ENCODE measurements at regions of chr14 and their contacts with region 1.

Region 1: GRCh38 chr14:51239813-51240803 is at the start of gene TMX1:
- DNase-seq: peak; percentile 63 to 95 (median 80)
- ATAC-seq: peak; percentile 90
- H3K4me3 ChIP-seq: peak within 1 kb of the TSS; percentile 86
- H3K4me3 Mint-ChIP-seq: no peak within 1 kb of the TSS
- H3K27ac ChIP-seq: peak within 1 kb of the TSS; percentile 69 to 75
- H3K27ac Mint-ChIP-seq: no peak within 1 kb of the TSS
- H3K4me1 ChIP-seq: peaks cover 19% of the 10 kb centered on the region
- H3K4me1 Mint-ChIP-seq: peaks cover 42% of the 10 kb centered on the region
- H3K27me3 ChIP-seq: no peaks in the 10 kb centered on the region
- H3K27me3 Mint-ChIP-seq: no peaks in the 10 kb centered on the region
- CTCF ChIP-seq: no peak
- total RNA-seq, gene TMX1: 9.5 to 11.0 TPM

Region 2: GRCh38 chr14:51094901-51095853 is 144.9 kb before region 1 on chr14 and contains the start of gene TRIM9:
- CTCF ChIA-PET with region 1: no interaction called
- POLR2A ChIA-PET with region 1: interaction called, 18 read pairs
- intact Hi-C with region 1: loop called (anchors 2 to 5 kb)
- DNase-seq: peak; percentile 78 to 96 (median 88)
- ATAC-seq: peak; percentile 97
- H3K4me3 ChIP-seq: peak within 1 kb of the TSS; percentile 73
- H3K4me3 Mint-ChIP-seq: peak within 1 kb of the TSS; percentile 99
- H3K27ac ChIP-seq: no peak within 1 kb of the TSS
- H3K27ac Mint-ChIP-seq: peak within 1 kb of the TSS; percentile 84
- H3K4me1 ChIP-seq: peaks cover 25% of the 10 kb centered on the region
- H3K4me1 Mint-ChIP-seq: peaks cover 13% of the 10 kb centered on the region
- H3K27me3 ChIP-seq: peaks cover 5 to 23% of the 10 kb centered on the region in 2 experiments
- H3K27me3 Mint-ChIP-seq: peaks cover 32% of the 10 kb centered on the region
- CTCF ChIP-seq: no peak
- total RNA-seq, gene TRIM9: 0.19 to 0.45 TPM